Posterior cingulate gyrus (tissue), 11 donors: ENCODE measurements at regions of chr6 and their contacts with region 1.

Region 1: GRCh38 chr6:39309942-39310531 is 4.2 kb downstream of the KCNK17 start:
- DNase-seq: peak; percentile 50 to 96 (median 78)

Region 2: DNA sequence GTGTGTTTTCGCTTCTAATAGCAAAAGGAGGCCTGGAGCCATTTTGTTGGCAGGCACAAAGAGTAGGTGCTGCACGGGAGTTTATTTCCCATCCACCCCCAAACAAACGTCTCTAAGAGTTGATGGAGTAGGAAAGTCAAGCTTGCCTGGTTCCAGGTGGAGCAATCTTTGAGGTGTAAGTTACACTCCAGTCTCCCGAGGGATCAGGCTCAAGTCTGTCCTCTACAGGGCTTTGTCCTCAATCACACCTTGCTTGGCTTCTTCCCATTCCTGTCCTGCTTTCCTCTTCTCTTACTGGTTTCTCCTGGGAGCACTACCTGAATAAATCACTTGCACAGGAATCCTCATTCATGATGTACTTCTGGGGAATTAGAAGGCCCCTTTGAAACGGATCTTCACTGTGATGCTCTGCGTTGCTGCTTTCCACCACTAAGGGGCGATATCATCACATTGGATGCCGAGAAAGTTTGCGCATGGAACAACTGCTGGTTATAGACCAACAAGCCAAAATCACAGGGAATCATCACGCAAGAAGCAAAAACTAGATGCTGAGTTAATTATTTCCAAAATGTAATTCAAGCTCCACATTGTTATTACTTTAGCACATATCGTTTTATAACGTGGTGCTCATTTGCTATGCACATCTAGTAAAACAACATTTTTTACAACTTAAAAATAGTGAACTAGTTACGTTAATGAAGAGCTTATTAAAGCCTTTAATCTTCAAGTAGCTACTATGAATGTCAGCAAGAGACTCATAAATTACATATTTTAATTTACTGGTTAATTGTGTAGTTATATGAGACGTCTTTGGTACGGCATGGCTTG is 438.1 kb before region 1 on chr6:
- intact Hi-C with region 1: loop called (anchors 2 kb)
- DNase-seq: peak in 7 of 10 donors; percentile 22 to 86 (median 53)

Region 3: DNA sequence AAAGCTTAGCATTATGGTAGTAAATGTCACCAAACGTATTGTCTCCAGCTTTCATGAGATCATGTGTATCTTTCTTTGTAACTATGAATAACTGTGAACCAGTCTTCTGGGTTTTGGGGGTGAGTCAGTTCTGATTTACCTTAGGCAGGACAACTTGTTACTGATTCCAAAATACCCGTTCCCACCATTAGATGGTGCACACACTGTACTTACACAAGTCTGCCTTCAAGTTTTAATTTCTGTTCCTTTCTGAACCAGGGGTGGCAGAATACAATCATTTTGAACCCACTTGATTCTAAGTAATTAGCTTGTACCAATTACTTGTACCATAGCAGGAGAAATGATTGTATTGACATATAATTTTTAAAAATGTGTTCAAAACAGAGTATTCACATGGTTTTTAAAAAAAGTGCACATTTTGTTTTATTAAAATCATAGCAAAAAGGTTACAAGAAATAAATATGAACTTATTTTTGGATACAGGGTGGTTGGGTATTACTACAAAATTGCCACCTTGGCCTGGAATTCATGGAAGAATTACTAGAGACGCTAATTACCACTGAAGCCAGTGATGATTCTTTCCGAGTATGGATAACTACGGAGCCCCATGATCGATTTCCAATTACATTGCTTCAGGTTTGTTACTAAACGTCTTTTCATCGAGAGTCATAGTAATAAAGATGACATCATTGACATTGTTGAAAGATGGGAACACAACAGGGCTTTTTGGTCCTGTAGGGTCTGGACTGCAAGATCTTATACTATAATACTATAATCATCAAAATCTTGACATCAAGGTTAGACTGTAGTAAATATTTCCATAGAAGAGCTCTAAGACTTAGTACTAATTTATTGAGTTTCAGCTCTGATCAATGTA is 336.6 kb before region 1 on chr6:
- intact Hi-C with region 1: loop called (anchors 5 kb)
- DNase-seq: no peak

Region 4: GRCh38 chr6:39166189-39166911 is 143.7 kb before region 1 on chr6:
- intact Hi-C with region 1: loop called (anchors 1 kb)
- DNase-seq: peak; percentile 58 to 97 (median 84)